Activated T-helper 1 cell treated with anti-CD3 and anti-CD28 coated beads, Interleukin-12 subunit alpha, Interleukin-12 subunit beta, Interleukin-2, Interleukin-4 antibody, amounts not matched to agents 30 ng/mL and 10 ng/mL and 1 ng/mL, durations not matched to agents 14 hours and 24 hours and 36 hours (primary cell): ENCODE measurements at regions of chr10 and their contacts with region 1.

Region 1: DNA sequence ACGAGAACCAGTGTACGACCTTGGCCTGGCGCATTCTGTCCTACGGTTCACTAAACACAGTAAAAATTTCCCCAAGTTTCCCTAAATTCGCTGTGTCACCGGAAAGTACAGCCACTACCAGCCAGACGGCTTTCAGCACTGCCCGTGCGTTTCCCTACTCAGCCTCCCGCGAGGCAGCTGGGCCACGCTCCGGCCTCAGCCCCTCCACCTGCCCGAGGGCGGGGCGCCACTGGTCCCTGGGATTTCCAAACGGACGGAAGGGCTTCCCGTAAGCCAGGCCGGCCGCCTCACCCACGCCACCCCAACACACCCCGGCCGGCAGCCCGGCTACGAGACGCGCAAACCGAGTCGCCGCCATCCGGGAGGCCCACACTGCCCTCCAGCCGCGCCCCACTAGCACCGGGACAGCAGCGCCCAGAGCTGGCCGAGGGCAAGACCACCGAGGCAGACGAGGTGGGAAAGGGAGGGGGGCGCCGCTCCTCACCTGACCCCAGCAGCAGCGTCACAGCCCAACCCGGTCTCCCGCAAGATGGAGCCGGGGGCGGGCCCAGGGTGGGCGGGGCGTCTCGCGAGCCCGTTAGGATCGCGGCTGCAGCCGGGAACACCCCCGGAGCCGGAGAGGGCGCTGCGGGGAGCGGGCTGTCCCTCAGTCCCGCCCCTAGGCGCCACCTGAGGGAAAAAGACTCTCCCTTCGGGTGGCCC is at the start of gene ANXA7:
- DNase-seq: peak; percentile 89
- H3K4me3 Mint-ChIP-seq: peak within 1 kb of the TSS; percentile 92
- H3K27ac Mint-ChIP-seq: peak within 1 kb of the TSS; percentile 90
- H3K4me1 Mint-ChIP-seq: peaks cover 45% of the 10 kb centered on the region
- H3K27me3 Mint-ChIP-seq: no peaks in the 10 kb centered on the region
- total RNA-seq, gene ANXA7: 152 and 157 TPM in 2 replicates

Region 2: GRCh38 chr10:73167783-73168464 is 245.8 kb before region 1 on chr10 and contains the starts of genes ECD and FAM149B1:
- intact Hi-C with region 1: loop called (anchors 1 kb)
- DNase-seq: peak; percentile 91
- H3K4me3 Mint-ChIP-seq: peak within 1 kb of the TSS; percentile 99
- H3K27ac Mint-ChIP-seq: peak within 1 kb of the TSS; percentile 99
- H3K4me1 Mint-ChIP-seq: peaks cover 42% of the 10 kb centered on the region
- H3K27me3 Mint-ChIP-seq: no peaks in the 10 kb centered on the region
- total RNA-seq, gene ECD: 38.0 and 39.5 TPM in 2 replicates
- total RNA-seq, gene FAM149B1: 11.1 and 11.3 TPM in 2 replicates

Region 3: DNA sequence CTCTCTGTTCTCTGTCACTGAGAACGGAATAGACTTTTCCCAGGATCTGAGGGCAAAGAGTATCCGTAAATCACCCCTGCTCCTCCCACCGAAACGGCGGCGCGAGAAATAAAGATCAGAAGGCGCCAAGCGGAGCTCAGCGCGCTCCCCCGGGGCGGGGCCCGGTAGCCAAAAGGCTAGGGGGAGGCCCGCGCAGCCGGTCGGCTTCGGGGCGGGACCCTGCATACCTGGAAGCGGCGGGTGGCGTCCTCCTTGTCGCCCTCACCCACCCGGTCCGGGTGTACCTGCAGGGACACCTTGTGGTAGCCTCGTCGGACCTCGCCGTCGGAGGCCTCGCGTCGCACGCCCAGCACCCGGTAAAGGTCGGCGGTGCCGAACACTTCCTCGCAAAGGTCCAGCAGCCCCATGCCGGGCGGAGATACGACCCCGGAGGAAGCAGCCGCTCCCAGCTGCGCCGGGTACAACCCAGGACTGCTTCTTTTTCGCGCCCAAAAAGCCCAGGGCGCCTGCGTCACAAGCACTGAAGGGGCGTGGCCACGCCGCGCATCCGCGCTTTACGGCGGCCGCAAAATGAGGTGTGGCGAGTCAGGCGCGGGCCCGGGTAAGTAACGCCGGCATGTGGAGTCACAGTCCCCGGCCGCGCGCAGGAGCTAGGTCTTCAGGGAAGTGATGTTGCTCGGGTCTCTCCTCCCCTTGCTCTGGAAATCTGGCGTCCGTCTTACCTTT is 166.7 kb before region 1 on chr10 and contains the start of gene DNAJC9:
- intact Hi-C with region 1: loop called (anchors 1 kb)
- DNase-seq: peak; percentile 96
- H3K4me3 Mint-ChIP-seq: peak within 1 kb of the TSS; percentile 97
- H3K27ac Mint-ChIP-seq: peak within 1 kb of the TSS; percentile 95
- H3K4me1 Mint-ChIP-seq: peaks cover 67% of the 10 kb centered on the region
- H3K27me3 Mint-ChIP-seq: no peaks in the 10 kb centered on the region
- total RNA-seq, gene DNAJC9: 55.4 and 55.5 TPM in 2 replicates

Region 4: GRCh38 chr10:73358331-73359279 is 55.1 kb before region 1 on chr10 and contains the start of gene CFAP70:
- intact Hi-C with region 1: loop called (anchors 1 kb)
- DNase-seq: peak; percentile 90
- H3K4me3 Mint-ChIP-seq: peak within 1 kb of the TSS; percentile 93
- H3K27ac Mint-ChIP-seq: peak within 1 kb of the TSS; percentile 86
- H3K4me1 Mint-ChIP-seq: peaks cover 20% of the 10 kb centered on the region
- H3K27me3 Mint-ChIP-seq: peaks cover 8% of the 10 kb centered on the region
- total RNA-seq, gene CFAP70: 0.26 and 0.34 TPM in 2 replicates

Region 5: DNA sequence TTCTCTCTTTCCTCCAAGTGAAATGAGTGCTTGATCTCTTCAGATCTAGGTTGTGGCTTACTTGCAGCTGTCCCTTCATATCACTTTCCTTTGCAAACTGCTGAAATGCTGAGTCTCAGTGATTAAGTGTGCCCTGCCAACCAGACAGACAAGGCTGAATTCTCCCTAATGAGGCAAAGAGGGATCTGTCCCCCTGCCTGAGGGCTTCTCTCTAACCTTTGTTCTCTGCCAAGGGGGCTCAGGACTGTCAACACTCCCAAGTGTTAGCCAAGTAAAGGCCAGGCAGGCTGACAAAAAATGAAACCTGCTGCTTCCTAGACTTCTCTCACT is 19.8 kb after region 1 on chr10 and contains the start of gene MSS51:
- intact Hi-C with region 1: no loop called
- DNase-seq: no peak
- H3K4me3 Mint-ChIP-seq: no peak within 1 kb of the TSS
- H3K27ac Mint-ChIP-seq: no peak within 1 kb of the TSS
- H3K4me1 Mint-ChIP-seq: peaks cover 13% of the 10 kb centered on the region
- H3K27me3 Mint-ChIP-seq: no peaks in the 10 kb centered on the region
- total RNA-seq, gene MSS51: 3.1 and 3.7 TPM in 2 replicates